ENCODE measurements at regions of chr12 and their contacts with region 1.

Region 1: DNA sequence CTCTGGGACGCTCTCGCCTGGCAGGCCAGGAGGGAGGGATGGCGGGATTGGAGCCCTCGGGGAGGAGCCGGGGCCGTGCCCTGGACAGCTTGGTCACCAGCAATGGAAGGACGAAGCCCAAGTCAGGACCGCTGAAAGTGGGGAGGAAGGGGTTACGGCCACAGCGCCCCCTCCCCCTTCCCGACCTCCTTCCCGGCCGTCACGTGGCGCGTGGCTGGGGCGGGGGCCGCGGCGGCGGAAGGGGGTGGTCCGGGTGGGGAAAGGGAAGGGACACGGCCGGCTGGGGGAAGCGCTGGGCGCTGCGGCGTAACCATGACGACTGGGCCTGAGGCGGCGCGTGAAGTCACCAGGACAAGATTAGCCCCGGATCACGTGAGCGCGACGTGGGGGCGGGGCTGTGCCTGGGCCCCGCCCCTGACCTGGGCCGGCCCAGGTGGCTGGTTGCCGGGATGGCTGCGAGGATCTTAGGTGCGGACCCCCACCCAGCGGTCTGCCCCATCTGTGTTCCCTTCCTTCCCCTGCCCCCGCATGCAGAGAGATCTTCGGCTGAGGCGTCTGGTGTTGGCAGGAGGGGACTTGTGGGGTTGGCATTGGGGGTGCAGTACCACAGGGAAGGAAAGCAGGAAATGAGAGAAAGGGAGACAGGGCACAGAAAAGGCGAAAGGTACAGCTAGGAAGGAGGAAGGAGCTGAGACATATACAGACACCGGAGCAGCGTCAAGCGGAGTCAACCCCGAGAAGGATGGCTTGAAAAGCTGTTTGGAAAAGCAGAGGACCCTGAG is 6.2 kb downstream of the MAP3K12 start:
- DNase-seq: peak; percentile 92
- H3K4me3 Mint-ChIP-seq: peak overlapping the region; percentile 80
- H3K27ac Mint-ChIP-seq: peak overlapping the region; percentile 76
- H3K4me1 Mint-ChIP-seq: peaks cover 26% of the 10 kb centered on the region
- H3K27me3 Mint-ChIP-seq: no peaks in the 10 kb centered on the region

Region 2: DNA sequence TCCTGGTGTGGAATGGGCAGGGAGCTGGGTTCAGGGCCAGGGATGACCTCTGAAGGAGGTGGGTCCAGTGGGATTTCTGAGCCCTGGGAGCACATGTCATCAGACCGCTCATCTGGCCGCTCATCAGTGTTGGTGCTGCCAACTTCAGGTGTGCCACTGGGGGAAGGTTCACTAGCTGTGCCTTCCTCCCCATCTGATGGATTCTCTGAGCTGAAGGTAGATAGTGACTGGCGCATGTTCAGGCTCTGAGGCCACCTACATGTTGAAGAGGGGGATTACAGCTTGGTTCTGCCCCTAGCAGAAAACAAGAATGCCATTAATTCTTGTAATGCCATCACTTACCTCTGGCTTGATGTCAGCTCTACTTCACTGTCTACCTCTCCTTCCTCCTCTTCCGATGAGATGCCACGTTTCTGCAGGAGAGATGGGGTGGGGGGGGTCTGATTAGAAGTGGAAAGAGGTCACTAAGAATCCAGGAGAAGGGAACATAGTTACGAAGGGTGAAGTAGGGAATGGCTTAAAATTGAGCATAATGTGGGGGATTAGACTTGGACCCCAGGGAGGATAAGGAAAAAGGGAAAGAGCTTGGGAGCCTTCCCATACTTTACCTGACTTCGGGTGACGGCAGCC is 10.9 kb before region 1 on chr12:
- CTCF ChIA-PET with region 1: interaction called, 9 read pairs
- POLR2A ChIA-PET with region 1: interaction called, 11 read pairs
- intact Hi-C with region 1: no loop called
- DNase-seq: no peak
- H3K4me3 Mint-ChIP-seq: no peak overlapping the region
- H3K27ac Mint-ChIP-seq: peak overlapping the region; percentile 11
- H3K4me1 Mint-ChIP-seq: peaks cover 18% of the 10 kb centered on the region
- H3K27me3 Mint-ChIP-seq: no peaks in the 10 kb centered on the region